GM12878 (cell line): ENCODE measurements at regions of chr1 and their contacts with region 1.

Region 1: GRCh38 chr1:31663622-31664452 is 19.2 kb upstream of the PEF1 start:
- DNase-seq: no peak
- ATAC-seq: peak; percentile 60
- H3K4me3 ChIP-seq: no peak overlapping the region
- H3K27ac ChIP-seq: no peak overlapping the region
- H3K4me1 ChIP-seq: no peaks in the 10 kb centered on the region
- H3K27me3 ChIP-seq: no peaks in the 10 kb centered on the region; a peak in 1 of 4 replicates
- CTCF ChIP-seq: peak; percentile 92 to 95 (median 95)
- EP300 ChIP-seq: no peak
- POLR2A ChIP-seq: no peak
- RAD21 ChIP-seq: peak; percentile 93

Region 2: DNA sequence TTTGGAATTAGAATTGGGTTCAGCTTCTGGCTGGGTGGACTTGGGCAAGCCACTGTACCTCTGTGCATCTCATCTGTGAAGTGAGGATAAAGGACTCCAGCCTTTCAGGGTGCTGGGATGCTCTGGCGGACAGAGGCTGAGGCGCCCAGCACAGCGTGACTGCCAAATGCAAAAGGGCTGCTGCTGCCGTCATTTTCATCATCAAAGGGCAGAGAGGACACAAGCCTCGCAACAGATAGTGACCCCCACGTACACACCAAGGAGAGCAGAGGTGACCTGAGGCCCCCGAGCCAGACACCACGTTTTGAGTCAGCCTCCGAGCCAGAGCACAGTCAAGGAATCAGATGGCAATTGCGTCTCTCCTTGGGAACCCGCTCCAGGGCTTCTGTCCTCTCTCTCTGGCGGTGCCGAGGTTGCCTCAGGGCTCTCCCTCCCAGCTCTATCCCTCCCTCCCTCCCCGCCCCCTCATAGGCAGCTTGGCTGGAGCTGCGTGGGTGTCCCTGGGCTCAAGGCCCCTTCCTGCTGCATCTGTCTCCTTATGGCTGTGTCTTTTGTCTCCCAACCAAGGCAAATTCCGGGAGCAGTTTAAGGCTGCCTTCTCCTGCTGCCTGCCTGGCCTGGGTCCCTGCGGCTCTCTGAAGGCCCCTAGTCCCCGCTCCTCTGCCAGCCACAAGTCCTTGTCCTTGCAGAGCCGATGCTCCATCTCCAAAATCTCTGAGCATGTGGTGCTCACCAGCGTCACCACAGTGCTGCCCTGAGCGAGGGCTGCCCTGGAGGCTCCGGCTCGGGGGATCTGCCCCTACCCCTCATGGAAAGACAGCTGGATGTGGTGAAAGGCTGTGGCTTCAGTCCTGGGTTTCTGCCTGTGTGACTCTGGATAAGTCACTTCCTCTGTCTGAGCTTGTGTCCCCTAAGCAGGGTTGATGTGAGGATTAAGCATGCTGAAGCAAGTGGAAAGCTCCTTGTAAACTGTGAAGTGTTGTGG is 37.3 kb before region 1 on chr1:
- CTCF ChIA-PET with region 1: no interaction called
- POLR2A ChIA-PET with region 1: no interaction called
- RAD21 ChIA-PET with region 1: no interaction called
- SMC1A ChIA-PET with region 1: no interaction called
- in situ Hi-C with region 1: no loop called
- intact Hi-C with region 1: no loop called
- DNase-seq: no peak
- ATAC-seq: no peak
- H3K4me3 ChIP-seq: no peak overlapping the region
- H3K27ac ChIP-seq: no peak overlapping the region
- H3K4me1 ChIP-seq: no peaks in the 10 kb centered on the region; the same call in none of the 2 replicates
- H3K27me3 ChIP-seq: no peaks in the 10 kb centered on the region
- CTCF ChIP-seq: no peak
- EP300 ChIP-seq: no peak
- POLR2A ChIP-seq: no peak
- RAD21 ChIP-seq: no peak

Region 3: DNA sequence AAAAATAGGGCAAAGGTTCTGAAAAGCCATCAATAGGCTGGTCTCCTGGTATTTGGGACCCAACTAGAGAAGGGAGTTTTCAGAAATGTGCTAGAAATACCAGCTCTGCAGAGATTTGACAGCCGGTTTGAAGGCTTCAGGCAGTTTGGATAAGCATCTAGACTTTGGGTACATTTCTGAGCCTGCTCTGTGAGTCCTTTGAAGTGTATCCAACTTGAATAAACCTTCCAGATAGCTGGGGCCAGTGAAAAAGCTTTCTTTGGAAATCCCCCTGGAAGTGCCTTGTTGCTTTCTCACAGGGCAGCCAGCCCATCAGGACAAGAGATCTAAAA is 12.8 kb before region 1 on chr1:
- CTCF ChIA-PET with region 1: interaction called, 10 read pairs
- POLR2A ChIA-PET with region 1: interaction called, 4 read pairs
- RAD21 ChIA-PET with region 1: interaction called, 3 read pairs
- SMC1A ChIA-PET with region 1: interaction called, 6 read pairs
- in situ Hi-C with region 1: no loop called
- intact Hi-C with region 1: no loop called
- DNase-seq: no peak
- ATAC-seq: no peak
- H3K4me3 ChIP-seq: no peak overlapping the region
- H3K27ac ChIP-seq: no peak overlapping the region
- H3K4me1 ChIP-seq: no peaks in the 10 kb centered on the region
- H3K27me3 ChIP-seq: no peaks in the 10 kb centered on the region; a peak in 1 of 4 replicates
- CTCF ChIP-seq: no peak
- EP300 ChIP-seq: no peak
- POLR2A ChIP-seq: no peak
- RAD21 ChIP-seq: no peak

Region 4: DNA sequence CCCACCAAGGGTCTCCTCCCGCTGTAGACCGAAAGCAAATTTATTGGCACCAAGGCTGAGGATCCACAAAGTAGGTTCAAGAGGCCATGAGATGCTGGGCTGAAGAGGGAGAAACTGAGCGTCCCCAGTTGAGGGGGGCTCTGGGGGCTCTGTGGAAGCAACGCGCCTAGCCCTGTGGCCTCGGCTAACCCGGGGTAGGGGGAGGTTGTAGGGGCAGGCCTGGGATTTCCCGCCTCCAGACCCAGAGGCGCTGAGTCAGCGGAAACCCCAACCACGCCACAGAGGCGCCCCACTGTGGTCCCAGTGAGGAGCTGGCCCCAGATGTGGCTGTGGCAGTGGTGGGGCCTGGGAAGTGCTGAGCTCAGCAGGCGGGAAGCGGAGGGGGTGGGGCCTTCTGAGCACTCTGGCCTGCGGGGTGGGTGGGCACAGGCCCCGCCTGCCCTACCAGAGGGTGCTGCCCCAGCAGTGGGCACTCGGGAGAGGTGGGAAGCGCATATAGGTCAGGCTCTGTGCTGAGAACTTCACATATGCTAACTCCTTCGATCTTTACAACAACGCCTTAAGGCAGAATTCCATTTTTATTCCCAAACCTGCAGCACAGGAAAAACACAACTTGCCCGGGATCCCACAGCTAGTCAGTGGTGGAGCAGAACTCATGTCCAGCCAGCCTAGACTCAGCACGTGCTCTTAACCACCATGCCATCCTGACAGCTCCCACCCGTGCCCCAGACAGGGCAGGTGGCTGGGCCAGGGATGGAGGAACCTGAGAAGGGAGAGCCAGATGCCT is 41.4 kb after region 1 on chr1:
- CTCF ChIA-PET with region 1: interaction called, 83 read pairs
- POLR2A ChIA-PET with region 1: interaction called, 4 read pairs
- RAD21 ChIA-PET with region 1: interaction called, 53 read pairs
- SMC1A ChIA-PET with region 1: interaction called, 51 read pairs
- in situ Hi-C with region 1: loop called (anchors 5 kb)
- intact Hi-C with region 1: loop called (anchors 1 kb)
- DNase-seq: no peak
- ATAC-seq: peak; percentile 81
- H3K4me3 ChIP-seq: peak overlapping the region; percentile 2; the same call in 1 of the 2 replicates
- H3K27ac ChIP-seq: peak overlapping the region; percentile 62
- H3K4me1 ChIP-seq: peaks cover 45% of the 10 kb centered on the region
- H3K27me3 ChIP-seq: no peaks in the 10 kb centered on the region
- CTCF ChIP-seq: peak; percentile 32 to 78 (median 59); a peak in 5 of 6 replicates
- EP300 ChIP-seq: no peak
- POLR2A ChIP-seq: no peak
- RAD21 ChIP-seq: peak; percentile 79

Region 5: DNA sequence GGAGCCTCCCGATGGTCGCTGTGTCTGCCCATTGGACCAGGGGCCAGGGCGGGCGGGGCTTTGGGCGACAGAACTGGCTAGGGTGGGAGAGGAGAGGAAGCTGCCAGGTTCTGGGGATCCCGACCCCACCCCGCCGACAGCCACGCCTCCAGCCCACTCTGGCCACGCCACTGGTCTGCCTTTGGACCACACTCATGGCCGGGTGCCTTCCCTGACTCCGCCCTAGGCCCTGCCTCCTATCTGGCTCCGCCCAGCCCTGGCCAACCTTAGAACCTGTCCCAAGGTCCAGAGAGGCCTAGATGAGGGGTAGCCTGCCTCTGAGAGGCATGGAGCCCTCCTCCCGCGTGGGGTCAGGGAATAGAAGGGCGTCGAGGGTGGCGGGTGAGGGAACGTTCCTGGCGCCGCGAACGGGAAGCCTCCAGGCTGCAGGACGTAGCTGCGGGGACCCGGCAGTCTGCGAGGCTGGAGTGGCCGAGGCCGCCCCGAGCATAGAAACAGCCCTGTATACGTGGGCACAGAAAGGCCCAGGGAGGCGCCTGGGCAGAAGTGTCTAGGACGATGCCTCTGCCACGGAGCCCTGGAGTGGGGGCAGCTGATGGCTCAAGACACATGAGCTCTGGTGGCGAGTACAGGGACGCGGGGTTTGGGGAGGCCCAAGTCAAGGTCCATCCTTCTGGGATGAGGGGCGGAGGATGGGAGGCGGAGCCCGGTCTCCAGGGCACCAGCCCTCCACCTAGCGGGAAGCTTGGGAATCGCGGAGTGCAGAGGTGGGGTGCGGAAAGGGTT is 51.4 kb after region 1 on chr1:
- CTCF ChIA-PET with region 1: interaction called, 19 read pairs
- POLR2A ChIA-PET with region 1: no interaction called
- RAD21 ChIA-PET with region 1: interaction called, 12 read pairs
- SMC1A ChIA-PET with region 1: interaction called, 7 read pairs
- in situ Hi-C with region 1: no loop called
- intact Hi-C with region 1: no loop called
- DNase-seq: no peak
- ATAC-seq: peak; percentile 98
- H3K4me3 ChIP-seq: peak overlapping the region; percentile 38; the same call in 1 of the 2 replicates
- H3K27ac ChIP-seq: no peak overlapping the region
- H3K4me1 ChIP-seq: peaks cover 4% of the 10 kb centered on the region; the same call in 1 of the 2 replicates
- H3K27me3 ChIP-seq: peaks cover 0 to 6% of the 10 kb centered on the region in 2 experiments; a peak in 1 of 4 replicates
- CTCF ChIP-seq: peak; percentile 54 to 82 (median 64)
- EP300 ChIP-seq: no peak
- POLR2A ChIP-seq: no peak
- RAD21 ChIP-seq: no peak

Region 6: DNA sequence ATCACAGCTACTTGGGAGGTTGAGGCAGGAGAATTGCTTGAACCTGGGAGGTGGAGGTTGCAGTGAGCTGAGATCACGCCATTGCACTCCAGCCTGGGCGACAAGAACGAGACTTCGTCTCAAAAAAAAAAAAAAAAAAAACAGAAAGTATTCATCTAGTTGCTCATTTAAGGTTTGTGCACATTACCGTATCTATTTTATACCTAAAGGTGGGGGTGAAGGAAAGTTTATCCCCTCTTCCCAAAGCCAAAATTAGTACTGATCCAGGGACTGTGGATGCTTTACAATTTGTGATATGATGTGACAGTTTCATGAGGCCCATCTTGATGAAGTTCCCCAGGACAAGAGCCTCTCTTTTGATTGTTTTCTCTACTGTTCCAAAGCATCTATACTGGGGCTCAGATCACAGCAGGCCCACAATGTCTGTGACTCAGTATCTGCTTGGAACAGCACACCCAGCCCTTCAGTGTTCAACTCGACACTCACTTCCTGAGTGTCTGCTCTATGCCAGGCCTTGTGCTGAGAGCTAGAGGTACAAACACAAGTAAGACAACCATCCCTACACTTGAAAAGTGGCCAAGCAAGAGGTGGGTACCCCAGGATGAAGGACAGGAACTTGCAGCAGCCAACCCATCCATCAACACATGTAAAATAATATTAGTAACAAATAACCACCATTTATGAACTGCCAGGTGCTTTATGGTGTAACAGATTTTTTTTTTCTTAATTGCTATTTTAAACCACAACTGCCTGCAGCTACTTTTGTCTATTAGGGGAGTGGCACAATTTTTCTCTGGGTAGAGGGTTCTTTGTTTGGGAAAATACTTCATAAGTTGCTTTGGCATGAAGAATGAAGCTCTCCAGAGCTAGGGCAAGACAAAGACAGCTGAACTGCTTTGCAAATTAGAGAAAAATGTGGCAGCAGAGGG is 320.8 kb after region 1 on chr1:
- CTCF ChIA-PET with region 1: no interaction called
- POLR2A ChIA-PET with region 1: no interaction called
- RAD21 ChIA-PET with region 1: no interaction called
- SMC1A ChIA-PET with region 1: no interaction called
- in situ Hi-C with region 1: no loop called
- intact Hi-C with region 1: loop called (anchors 5 kb)
- DNase-seq: no peak
- ATAC-seq: peak; percentile 40
- H3K4me3 ChIP-seq: peak overlapping the region; percentile 48; the same call in 1 of the 2 replicates
- H3K27ac ChIP-seq: peak overlapping the region; percentile 77
- H3K4me1 ChIP-seq: peaks cover 32% of the 10 kb centered on the region
- H3K27me3 ChIP-seq: no peaks in the 10 kb centered on the region
- CTCF ChIP-seq: no peak
- EP300 ChIP-seq: no peak
- POLR2A ChIP-seq: peak; percentile 60
- RAD21 ChIP-seq: no peak

Region 7: DNA sequence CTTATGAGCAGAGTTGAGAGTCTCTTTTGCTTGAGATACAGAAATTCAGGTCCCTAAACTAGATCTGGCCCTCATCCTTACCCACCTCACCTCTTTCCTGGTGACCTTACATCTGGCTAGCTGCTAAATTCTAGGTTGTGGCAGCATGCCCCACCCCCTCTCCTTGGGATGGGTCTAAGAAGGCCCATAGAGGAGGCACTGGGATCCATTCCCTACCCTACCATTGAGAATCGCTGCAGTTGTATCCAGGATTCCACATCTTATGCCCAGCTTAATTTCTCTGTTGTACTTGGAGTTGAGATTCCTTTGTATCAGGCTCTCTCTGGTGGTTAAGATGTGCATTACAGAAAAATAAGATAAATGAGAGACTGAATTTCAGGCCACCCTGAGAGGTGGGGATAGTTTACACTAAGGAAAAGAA is 399.4 kb after region 1 on chr1:
- CTCF ChIA-PET with region 1: interaction called, 3 read pairs
- POLR2A ChIA-PET with region 1: no interaction called
- RAD21 ChIA-PET with region 1: no interaction called
- SMC1A ChIA-PET with region 1: interaction called, 4 read pairs
- in situ Hi-C with region 1: no loop called
- intact Hi-C with region 1: loop called (anchors 10 kb)
- DNase-seq: no peak
- ATAC-seq: peak; percentile 80
- H3K4me3 ChIP-seq: no peak overlapping the region
- H3K27ac ChIP-seq: no peak overlapping the region
- H3K4me1 ChIP-seq: peaks cover 4% of the 10 kb centered on the region
- H3K27me3 ChIP-seq: no peaks in the 10 kb centered on the region
- CTCF ChIP-seq: peak; percentile 50 to 71 (median 63); a peak in 5 of 6 replicates
- EP300 ChIP-seq: no peak
- POLR2A ChIP-seq: no peak
- RAD21 ChIP-seq: peak; percentile 76